Psoas muscle (tissue), 8 donors: ENCODE measurements at regions of chr15 and their contacts with region 1.

Region 1: GRCh38 chr15:73908030-73908821 is 18.0 kb upstream of the LOXL1 start:
- DNase-seq: peak; percentile 84 to 91
- ATAC-seq: peak; percentile 96 to 100 (median 98)
- H3K4me3 ChIP-seq: no peak overlapping the region
- H3K27ac ChIP-seq: no peak overlapping the region
- H3K4me1 ChIP-seq: no peaks in the 10 kb centered on the region
- H3K27me3 ChIP-seq: peaks cover 0 to 2% (median 0%) of the 10 kb centered on the region in 3 donors
- CTCF ChIP-seq: peak; percentile 90

Region 2: GRCh38 chr15:73717802-73718201 is 190.4 kb before region 1 on chr15:
- intact Hi-C with region 1: loop called in 1 of 2 experiments (anchors 10 kb)
- DNase-seq: no peak
- ATAC-seq: no peak
- H3K4me3 ChIP-seq: no peak overlapping the region
- H3K27ac ChIP-seq: no peak overlapping the region
- H3K4me1 ChIP-seq: peaks cover 19% of the 10 kb centered on the region
- H3K27me3 ChIP-seq: no peaks in the 10 kb centered on the region
- CTCF ChIP-seq: no peak

Region 3: GRCh38 chr15:73794443-73795133 is 113.6 kb before region 1 on chr15:
- intact Hi-C with region 1: loop called in 1 of 2 experiments (anchors 5 kb)
- DNase-seq: no peak
- ATAC-seq: no peak
- H3K4me3 ChIP-seq: no peak overlapping the region
- H3K27ac ChIP-seq: no peak overlapping the region
- H3K4me1 ChIP-seq: peaks cover 9% of the 10 kb centered on the region
- H3K27me3 ChIP-seq: no peaks in the 10 kb centered on the region
- CTCF ChIP-seq: no peak

Region 4: DNA sequence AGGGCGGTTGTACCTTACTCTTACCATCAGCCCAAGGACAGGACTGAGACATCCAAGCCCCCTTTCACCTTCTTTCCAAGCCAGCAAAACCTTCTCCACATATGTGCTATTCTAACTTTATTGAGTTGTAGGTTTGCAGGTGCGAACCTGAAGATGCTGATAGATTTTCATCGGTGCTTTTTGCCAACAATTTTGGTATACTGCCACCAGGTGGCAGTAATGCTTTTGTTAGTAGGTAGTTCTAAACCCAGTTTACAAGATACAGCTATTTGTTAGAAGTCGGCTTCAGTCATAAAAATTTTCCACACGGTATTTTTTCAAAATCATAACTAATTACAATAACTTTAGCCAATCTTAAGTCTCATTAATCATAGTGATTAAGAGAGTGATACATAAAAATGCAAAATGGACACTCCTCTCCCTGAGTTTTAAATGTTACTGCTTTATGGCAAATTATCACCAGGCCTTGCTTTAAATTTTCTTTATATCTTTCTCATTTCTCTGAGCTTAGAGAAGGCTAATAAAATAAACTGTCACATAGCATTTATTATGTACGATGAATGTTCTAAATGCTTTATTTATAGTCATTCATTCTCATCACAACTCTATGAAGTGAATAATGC is 34.2 kb before region 1 on chr15:
- intact Hi-C with region 1: loop called (anchors 1 to 2 kb)
- DNase-seq: no peak
- ATAC-seq: no peak
- H3K4me3 ChIP-seq: no peak overlapping the region
- H3K27ac ChIP-seq: no peak overlapping the region
- H3K4me1 ChIP-seq: no peaks in the 10 kb centered on the region
- H3K27me3 ChIP-seq: peaks cover 0 to 26% (median 0%) of the 10 kb centered on the region in 3 donors
- CTCF ChIP-seq: peak; percentile 62

Region 5: DNA sequence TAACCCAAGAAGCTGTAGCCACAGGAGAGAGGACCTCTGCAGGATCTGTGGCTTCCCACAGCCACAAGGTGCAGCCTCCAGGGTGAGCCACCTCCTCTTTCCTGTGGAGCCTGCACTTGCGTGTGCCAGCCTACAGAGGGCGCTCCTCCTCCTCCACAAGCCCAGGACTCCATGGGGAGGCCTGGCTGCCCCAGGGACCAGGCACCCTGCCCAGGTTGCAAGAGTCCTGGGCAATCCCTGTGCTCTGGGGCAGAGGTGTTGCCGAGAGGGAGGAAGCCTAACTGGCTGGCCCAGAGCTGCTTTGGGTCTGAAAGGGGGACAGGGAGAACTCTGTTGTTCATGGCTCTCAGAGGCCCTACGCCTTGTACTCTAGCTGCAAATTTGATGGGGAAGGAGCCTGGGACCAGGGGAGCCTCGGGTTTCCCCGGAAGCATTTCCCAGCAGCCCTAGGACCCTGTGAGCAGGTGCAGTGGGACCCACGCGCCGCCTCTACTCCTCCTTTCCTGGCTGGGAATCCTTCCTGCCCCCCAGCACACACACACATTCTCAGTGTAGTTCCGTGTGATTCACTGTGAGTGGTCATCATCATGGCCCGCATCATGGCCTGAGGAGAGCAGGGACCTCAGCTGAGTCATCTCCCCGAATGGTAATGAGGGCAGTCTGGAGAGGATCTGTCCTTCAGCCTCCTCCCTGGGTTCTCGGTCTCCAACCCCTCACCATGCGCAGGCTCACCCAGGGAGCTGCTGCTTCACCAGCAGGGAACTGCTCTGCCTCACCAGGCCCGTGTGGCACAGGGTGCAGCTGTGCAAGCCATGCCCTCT is 10.6 kb before region 1 on chr15:
- intact Hi-C with region 1: no loop called
- DNase-seq: peak; percentile 39 to 60
- ATAC-seq: peak; percentile 48 to 92 (median 79)
- H3K4me3 ChIP-seq: no peak overlapping the region
- H3K27ac ChIP-seq: no peak overlapping the region
- H3K4me1 ChIP-seq: no peaks in the 10 kb centered on the region
- H3K27me3 ChIP-seq: no peaks in the 10 kb centered on the region
- CTCF ChIP-seq: peak; percentile 58